ENCODE measurements at regions of chr13 and their contacts with region 1.

Region 1: GRCh38 chr13:75876360-75877050 is 240.4 kb downstream of the LMO7 start:
- DNase-seq: peak; percentile 85
- H3K4me3 Mint-ChIP-seq: no peak overlapping the region
- H3K27ac Mint-ChIP-seq: no peak overlapping the region
- H3K4me1 Mint-ChIP-seq: peaks cover 12% of the 10 kb centered on the region
- H3K27me3 Mint-ChIP-seq: peaks cover 16% of the 10 kb centered on the region

Region 2: DNA sequence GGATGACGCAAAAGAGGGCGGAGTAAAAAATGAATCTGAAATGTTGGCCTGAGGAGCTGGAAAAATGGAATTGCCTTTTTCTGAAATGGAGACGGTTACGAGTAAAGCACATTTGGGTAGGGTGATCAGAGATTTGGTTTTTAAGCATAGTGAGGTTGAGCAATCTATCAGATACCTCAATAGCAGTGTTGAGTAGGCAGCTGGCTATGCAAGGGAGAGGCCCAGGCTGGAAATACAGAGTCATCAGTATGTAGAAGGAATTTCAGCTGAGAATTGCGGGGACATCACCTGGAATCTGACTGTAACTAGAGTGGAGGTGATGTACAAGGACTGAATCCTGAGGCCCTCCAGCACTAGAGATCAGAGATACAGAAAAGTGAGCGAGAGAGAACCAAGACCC is 15.6 kb before region 1 on chr13:
- intact Hi-C with region 1: no loop called
- DNase-seq: no peak
- H3K4me3 Mint-ChIP-seq: no peak overlapping the region
- H3K27ac Mint-ChIP-seq: no peak overlapping the region
- H3K4me1 Mint-ChIP-seq: no peaks in the 10 kb centered on the region
- H3K27me3 Mint-ChIP-seq: no peaks in the 10 kb centered on the region

Region 3: GRCh38 chr13:76016799-76017400 is 140.4 kb after region 1 on chr13:
- intact Hi-C with region 1: loop called (anchors 2 kb)
- DNase-seq: peak; percentile 72
- H3K4me3 Mint-ChIP-seq: no peak overlapping the region
- H3K27ac Mint-ChIP-seq: no peak overlapping the region
- H3K4me1 Mint-ChIP-seq: no peaks in the 10 kb centered on the region
- H3K27me3 Mint-ChIP-seq: no peaks in the 10 kb centered on the region

Region 4: DNA sequence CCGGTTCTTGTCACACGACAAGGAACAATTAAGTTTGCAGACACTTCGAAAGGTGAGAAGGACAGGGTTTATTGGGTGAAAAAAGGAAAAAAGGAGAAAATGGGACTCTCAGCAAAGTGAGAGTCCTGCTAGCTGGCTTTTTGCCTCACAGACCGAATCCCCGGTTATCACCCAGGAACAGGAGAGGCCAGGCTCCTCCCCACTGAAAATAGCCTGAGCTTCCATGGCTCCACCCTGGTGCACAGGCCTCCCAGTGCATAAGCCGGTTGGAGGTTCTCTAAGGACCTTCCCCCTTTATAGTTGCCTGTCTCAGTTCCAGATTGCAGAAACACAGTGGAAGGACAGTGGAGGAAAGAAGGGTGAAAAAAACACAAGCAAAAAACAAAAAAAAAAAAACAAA is 438.0 kb after region 1 on chr13:
- intact Hi-C with region 1: no loop called
- DNase-seq: no peak
- H3K4me3 Mint-ChIP-seq: no peak overlapping the region
- H3K27ac Mint-ChIP-seq: no peak overlapping the region
- H3K4me1 Mint-ChIP-seq: no peaks in the 10 kb centered on the region
- H3K27me3 Mint-ChIP-seq: no peaks in the 10 kb centered on the region

Region 5: DNA sequence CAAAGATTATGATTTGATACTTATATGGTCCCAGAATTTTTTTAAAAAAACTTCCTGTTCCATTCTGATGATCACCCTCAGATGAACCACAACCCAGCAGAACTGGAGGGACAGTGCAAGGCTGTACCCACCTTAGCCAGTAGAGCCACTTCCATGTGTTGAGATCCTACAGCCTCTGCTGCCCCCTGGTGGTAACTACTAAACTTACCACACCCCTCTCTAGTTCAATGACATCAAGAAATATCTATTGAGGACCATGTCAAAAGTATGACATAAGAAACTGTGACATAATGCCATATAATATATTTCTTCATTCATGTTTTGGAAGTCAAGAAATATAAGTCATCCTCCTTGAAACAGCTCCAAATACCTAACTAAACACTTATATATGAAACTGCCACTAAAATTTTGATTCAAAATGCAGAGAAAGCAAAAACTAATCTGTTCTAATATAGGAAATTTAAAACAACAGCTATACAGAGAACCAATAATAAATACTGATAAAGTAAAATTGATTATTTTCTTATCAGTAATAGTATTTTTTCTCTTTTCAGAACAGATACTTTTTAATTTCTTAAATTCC is 597.1 kb after region 1 on chr13:
- intact Hi-C with region 1: loop called (anchors 1 kb)
- DNase-seq: peak; percentile 89
- H3K4me3 Mint-ChIP-seq: no peak overlapping the region
- H3K27ac Mint-ChIP-seq: no peak overlapping the region
- H3K4me1 Mint-ChIP-seq: no peaks in the 10 kb centered on the region
- H3K27me3 Mint-ChIP-seq: peaks cover 1% of the 10 kb centered on the region

Region 6: GRCh38 chr13:76903544-76904162 is 1027.1 kb after region 1 on chr13:
- intact Hi-C with region 1: loop called (anchors 2 kb)
- DNase-seq: peak; percentile 90
- H3K4me3 Mint-ChIP-seq: no peak overlapping the region
- H3K27ac Mint-ChIP-seq: no peak overlapping the region
- H3K4me1 Mint-ChIP-seq: no peaks in the 10 kb centered on the region
- H3K27me3 Mint-ChIP-seq: peaks cover 30% of the 10 kb centered on the region

Region 7: DNA sequence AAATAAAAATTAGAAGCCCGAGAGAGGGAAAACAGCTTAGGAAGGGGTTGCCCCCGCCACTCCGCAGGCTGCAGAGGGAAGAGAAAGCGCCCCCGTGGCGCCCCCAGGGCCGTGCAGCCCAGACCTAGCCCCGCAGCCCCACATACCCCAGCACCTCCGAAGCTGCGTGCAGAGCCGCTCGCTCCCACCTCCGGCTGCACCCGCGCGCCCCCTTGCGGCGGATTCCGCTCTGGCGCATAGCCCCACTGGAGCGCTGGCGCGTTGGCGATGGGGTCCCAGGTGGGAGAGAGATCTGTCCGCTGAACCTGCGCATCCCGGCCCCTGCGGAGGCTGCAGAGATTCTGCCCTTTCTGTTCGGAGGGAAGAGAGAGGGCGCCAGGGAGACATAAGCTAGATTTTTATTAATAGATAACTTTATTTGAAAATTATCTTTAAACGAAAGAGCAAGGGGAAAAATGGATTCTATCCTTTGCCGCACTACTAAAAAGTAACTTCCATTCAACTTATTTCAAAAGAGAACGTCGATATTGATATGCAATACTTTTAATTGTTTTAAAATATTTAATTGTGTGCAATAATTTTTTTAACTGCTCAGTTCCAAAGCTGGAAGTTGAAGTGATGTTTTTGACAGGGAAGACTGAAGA is 1103.7 kb after region 1 on chr13:
- intact Hi-C with region 1: loop called (anchors 5 kb)
- DNase-seq: peak; percentile 95
- H3K4me3 Mint-ChIP-seq: peak overlapping the region; percentile 78
- H3K27ac Mint-ChIP-seq: no peak overlapping the region
- H3K4me1 Mint-ChIP-seq: peaks cover 6% of the 10 kb centered on the region
- H3K27me3 Mint-ChIP-seq: peaks cover 47% of the 10 kb centered on the region

Region 8: GRCh38 chr13:77565635-77566034 is 1689.1 kb after region 1 on chr13:
- intact Hi-C with region 1: loop called (anchors 10 kb)
- DNase-seq: no peak
- H3K4me3 Mint-ChIP-seq: no peak overlapping the region
- H3K27ac Mint-ChIP-seq: no peak overlapping the region
- H3K4me1 Mint-ChIP-seq: no peaks in the 10 kb centered on the region
- H3K27me3 Mint-ChIP-seq: peaks cover 7% of the 10 kb centered on the region

Region 9: GRCh38 chr13:77620138-77620537 is 1743.6 kb after region 1 on chr13:
- intact Hi-C with region 1: no loop called
- DNase-seq: no peak
- H3K4me3 Mint-ChIP-seq: no peak overlapping the region
- H3K27ac Mint-ChIP-seq: no peak overlapping the region
- H3K4me1 Mint-ChIP-seq: no peaks in the 10 kb centered on the region
- H3K27me3 Mint-ChIP-seq: peaks cover 22% of the 10 kb centered on the region